ENCODE measurements at regions of chrX and their contacts with region 1.

Region 1: DNA sequence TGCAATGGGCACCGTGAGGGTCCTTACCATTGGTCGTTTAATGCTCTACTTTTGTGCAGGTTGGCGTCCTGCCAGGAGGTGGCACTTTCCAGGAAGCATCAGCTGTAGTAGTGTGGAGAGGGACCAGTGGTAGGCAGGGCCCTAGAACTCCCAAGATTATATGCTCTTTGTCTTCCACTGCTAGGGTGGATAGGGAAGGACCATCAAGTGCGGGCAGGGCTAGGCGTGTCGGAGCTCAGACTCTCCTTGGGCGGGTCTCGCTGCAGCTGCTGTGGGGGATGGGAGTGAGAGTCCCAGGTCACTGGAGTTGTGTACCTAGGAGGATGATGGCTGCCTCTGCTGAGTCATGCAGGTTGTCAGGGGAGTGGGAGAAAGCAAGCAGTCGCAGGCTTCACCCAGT is 134.7 kb downstream of the KLF8 start:
- DNase-seq: no peak
- ATAC-seq: no peak
- H3K4me3 ChIP-seq: no peak overlapping the region
- H3K27ac ChIP-seq: no peak overlapping the region
- H3K4me1 ChIP-seq: no peaks in the 10 kb centered on the region
- H3K27me3 ChIP-seq: no peaks in the 10 kb centered on the region
- CTCF ChIP-seq: no peak

Region 2: DNA sequence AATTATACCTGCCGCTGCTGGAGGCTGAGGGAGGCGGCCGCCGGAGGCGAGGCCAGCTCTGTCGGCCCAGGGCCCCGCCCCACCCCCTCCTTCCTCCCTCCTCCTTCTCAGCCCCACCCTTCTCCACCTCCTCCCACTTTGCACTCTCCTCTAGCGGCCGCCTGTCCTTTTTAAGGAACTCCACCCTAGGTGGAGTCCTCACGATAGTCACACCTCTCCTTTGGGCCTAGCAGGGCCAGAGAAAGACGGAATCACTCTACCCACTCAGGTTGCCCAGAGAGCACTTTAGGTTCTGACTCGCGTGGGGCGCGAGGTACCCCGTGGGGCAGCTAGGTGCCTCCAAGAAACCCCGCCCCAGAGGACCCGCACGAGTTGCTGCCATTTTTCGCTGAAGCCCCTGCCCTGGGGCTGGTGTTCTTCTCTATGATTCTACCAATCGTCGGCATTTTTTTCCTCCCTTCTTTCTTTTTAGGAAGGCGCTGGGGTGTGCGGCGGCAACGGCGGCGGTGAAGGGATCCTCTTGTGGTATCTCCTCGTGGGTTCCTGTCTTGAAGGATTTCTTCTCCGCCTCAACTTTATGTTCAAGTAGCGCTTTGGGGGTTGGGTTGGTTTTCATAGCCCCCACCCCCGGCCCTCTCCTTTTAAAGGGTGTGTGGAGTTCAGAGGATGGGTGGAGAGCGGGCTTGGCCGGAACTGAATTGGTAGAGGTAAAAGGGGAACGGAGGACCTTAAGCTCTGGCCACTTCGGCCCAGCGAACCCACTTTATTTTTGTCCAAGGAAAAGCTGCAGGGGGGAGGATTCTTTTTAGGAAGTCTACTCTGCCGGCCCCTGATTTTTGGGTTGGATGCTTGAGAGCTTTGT is 134.4 kb before region 1 on chrX and contains the start of gene KLF8:
- intact Hi-C with region 1: no loop called
- DNase-seq: peak; percentile 27 to 43
- ATAC-seq: peak; percentile 63 to 89 (median 80)
- H3K4me3 ChIP-seq: peak within 1 kb of the TSS; percentile 32 to 63 (median 56)
- H3K27ac ChIP-seq: peak within 1 kb of the TSS; percentile 29 to 76 (median 64)
- H3K4me1 ChIP-seq: peaks cover 0 to 36% (median 0%) of the 10 kb centered on the region in 9 donors
- H3K27me3 ChIP-seq: peaks cover 0 to 47% (median 0%) of the 10 kb centered on the region in 7 donors
- CTCF ChIP-seq: no peak
- total RNA-seq, gene KLF8: 0.91 to 3.2 (median 2.4) TPM

Region 3: GRCh38 chrX:56429581-56429980 is 62.7 kb after region 1 on chrX:
- intact Hi-C with region 1: no loop called
- DNase-seq: no peak
- ATAC-seq: no peak
- H3K4me3 ChIP-seq: no peak overlapping the region
- H3K27ac ChIP-seq: no peak overlapping the region
- H3K4me1 ChIP-seq: no peaks in the 10 kb centered on the region
- H3K27me3 ChIP-seq: peaks cover 0 to 6% (median 0%) of the 10 kb centered on the region in 7 donors
- CTCF ChIP-seq: no peak

Region 4: GRCh38 chrX:56623316-56623715 is 256.4 kb after region 1 on chrX:
- intact Hi-C with region 1: loop called in 1 of 10 experiments (anchors 10 kb)
- DNase-seq: no peak
- ATAC-seq: no peak
- H3K4me3 ChIP-seq: no peak overlapping the region
- H3K27ac ChIP-seq: no peak overlapping the region
- H3K4me1 ChIP-seq: no peaks in the 10 kb centered on the region
- H3K27me3 ChIP-seq: peaks cover 0 to 21% (median 0%) of the 10 kb centered on the region in 7 donors
- CTCF ChIP-seq: no peak